A673 (cell line): ENCODE measurements at regions of chrX and their contacts with region 1.

Region 1: GRCh38 chrX:7925867-7926472 is 1.2 kb downstream of the PNPLA4 start:
- DNase-seq: peak; percentile 83
- H3K4me3 ChIP-seq: no peak overlapping the region
- H3K27ac ChIP-seq: no peak overlapping the region
- H3K4me1 ChIP-seq: peaks cover 3% of the 10 kb centered on the region
- H3K27me3 ChIP-seq: no peaks in the 10 kb centered on the region
- CTCF ChIP-seq: peak; percentile 81

Region 2: DNA sequence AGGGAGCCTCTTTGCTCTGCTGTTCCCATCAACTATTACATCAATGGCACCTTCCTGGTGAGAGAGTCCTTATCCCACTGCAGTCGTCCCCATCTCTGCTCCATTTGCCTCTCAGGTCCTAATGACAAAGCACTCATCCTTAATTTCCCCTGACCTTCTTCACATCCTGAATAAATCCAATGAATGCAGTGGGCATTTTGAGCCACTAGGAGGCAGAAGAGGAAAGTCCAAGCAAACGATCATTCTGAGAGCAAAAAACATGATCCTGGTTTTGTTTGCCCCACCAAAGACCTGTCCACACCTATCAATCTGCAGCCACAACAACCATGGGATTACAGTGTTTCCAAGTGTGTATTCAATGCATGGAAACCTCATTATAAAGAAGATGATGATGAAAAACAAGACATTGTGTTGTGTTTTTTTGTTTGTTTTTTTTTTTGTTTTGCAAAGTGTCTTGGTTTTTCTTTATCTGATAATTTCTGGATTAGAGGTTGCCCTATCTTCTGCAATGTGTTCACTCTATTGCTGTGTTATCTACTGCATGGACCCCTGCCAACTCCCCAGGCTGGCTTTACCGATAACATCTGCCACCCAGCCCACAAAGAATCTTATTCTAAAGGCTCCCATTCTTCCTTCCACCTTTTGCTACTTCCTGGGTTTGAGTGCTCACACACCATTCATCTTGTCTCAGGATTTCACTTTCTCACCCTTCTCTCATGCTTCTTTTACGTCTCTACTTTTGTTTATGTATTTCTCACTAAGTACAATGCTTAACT is 1904.5 kb before region 1 on chrX:
- CTCF ChIA-PET with region 1: no interaction called
- POLR2A ChIA-PET with region 1: no interaction called
- intact Hi-C with region 1: loop called (anchors 10 kb)
- DNase-seq: peak; percentile 80
- H3K4me3 ChIP-seq: no peak overlapping the region
- H3K27ac ChIP-seq: no peak overlapping the region
- H3K4me1 ChIP-seq: peaks cover 16% of the 10 kb centered on the region
- H3K27me3 ChIP-seq: no peaks in the 10 kb centered on the region
- CTCF ChIP-seq: peak; percentile 88

Region 3: GRCh38 chrX:7132335-7133049 is 793.5 kb before region 1 on chrX:
- CTCF ChIA-PET with region 1: no interaction called
- POLR2A ChIA-PET with region 1: no interaction called
- intact Hi-C with region 1: loop called (anchors 5 kb)
- DNase-seq: peak; percentile 65
- H3K4me3 ChIP-seq: no peak overlapping the region
- H3K27ac ChIP-seq: no peak overlapping the region
- H3K4me1 ChIP-seq: peaks cover 7% of the 10 kb centered on the region
- H3K27me3 ChIP-seq: no peaks in the 10 kb centered on the region
- CTCF ChIP-seq: peak; percentile 60

Region 4: GRCh38 chrX:7242613-7243012 is 683.4 kb before region 1 on chrX:
- CTCF ChIA-PET with region 1: no interaction called
- POLR2A ChIA-PET with region 1: no interaction called
- intact Hi-C with region 1: no loop called
- DNase-seq: no peak
- H3K4me3 ChIP-seq: no peak overlapping the region
- H3K27ac ChIP-seq: no peak overlapping the region
- H3K4me1 ChIP-seq: no peaks in the 10 kb centered on the region
- H3K27me3 ChIP-seq: no peaks in the 10 kb centered on the region
- CTCF ChIP-seq: no peak

Region 5: GRCh38 chrX:7711167-7711566 is 214.8 kb before region 1 on chrX:
- CTCF ChIA-PET with region 1: no interaction called
- POLR2A ChIA-PET with region 1: no interaction called
- intact Hi-C with region 1: loop called (anchors 10 kb)
- DNase-seq: no peak
- H3K4me3 ChIP-seq: no peak overlapping the region
- H3K27ac ChIP-seq: no peak overlapping the region
- H3K4me1 ChIP-seq: no peaks in the 10 kb centered on the region
- H3K27me3 ChIP-seq: no peaks in the 10 kb centered on the region
- CTCF ChIP-seq: no peak

Region 6: DNA sequence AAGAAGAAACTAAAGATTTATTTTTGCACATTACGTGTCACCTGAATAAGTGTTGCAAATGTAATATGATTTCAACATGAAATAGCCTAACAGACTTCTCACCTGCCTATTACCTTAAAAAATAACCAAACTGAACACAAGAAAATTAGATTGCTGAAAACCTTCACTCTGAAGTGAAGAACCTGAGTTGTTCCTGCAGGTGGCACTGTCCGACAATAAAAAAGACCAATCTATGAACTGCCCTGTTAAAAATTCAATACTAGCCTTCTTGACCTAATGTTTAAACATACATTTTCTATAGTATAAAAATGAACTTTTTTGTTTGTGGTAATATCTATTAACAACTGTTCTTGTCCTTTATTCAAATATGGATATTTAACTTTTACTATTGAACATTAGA is 70.4 kb after region 1 on chrX:
- CTCF ChIA-PET with region 1: no interaction called
- POLR2A ChIA-PET with region 1: no interaction called
- intact Hi-C with region 1: no loop called
- DNase-seq: peak; percentile 50
- H3K4me3 ChIP-seq: no peak overlapping the region
- H3K27ac ChIP-seq: no peak overlapping the region
- H3K4me1 ChIP-seq: no peaks in the 10 kb centered on the region
- H3K27me3 ChIP-seq: no peaks in the 10 kb centered on the region
- CTCF ChIP-seq: peak; percentile 71